Activated CD8-positive, alpha-beta T cell treated with anti-CD3 and anti-CD28 coated beads for 36 hours (primary cell): ENCODE measurements at regions of chr9 and their contacts with region 1.

Region 1: GRCh38 chr9:109903515-109904138 is 123.6 kb downstream of the PALM2AKAP2 start:
- DNase-seq: peak; percentile 74
- ATAC-seq: peak; percentile 73
- H3K4me3 Mint-ChIP-seq: no peak overlapping the region
- H3K27ac Mint-ChIP-seq: no peak overlapping the region
- H3K4me1 Mint-ChIP-seq: no peaks in the 10 kb centered on the region
- H3K27me3 Mint-ChIP-seq: peaks cover under 1% of the 10 kb centered on the region
- CTCF ChIP-seq: peak; percentile 86

Region 2: DNA sequence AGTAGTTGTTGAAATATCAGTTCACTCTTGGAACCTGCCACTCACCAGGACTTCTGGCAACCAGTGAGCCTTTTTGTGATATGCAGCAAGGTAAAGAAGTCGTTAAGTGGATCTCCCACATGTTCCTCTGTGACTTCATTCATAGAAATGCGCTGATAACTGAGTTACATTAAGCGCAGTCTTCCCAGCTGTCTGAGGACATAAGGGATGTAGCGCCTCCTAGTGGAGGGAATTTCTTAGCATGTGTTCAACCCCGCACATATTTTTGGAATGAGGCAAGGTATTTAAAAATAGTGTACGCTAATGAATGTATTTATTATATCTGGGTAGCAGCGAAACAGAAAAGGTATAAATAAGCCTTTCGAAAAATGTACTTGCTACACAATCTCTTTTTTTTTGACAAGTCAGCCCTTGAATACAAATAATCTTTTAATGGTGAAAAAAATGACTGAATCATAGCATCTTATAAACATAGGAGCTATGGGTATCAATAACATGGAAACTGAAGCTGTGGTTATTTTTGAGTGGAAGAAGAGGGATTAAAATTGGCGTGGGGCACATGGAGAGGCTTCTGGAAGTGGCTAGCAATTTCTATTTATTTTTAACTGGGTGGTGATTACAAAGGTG is 85.7 kb before region 1 on chr9:
- CTCF ChIA-PET with region 1: no interaction called
- POLR2A ChIA-PET with region 1: no interaction called
- intact Hi-C with region 1: no loop called
- DNase-seq: peak; percentile 62
- ATAC-seq: no peak
- H3K4me3 Mint-ChIP-seq: no peak overlapping the region
- H3K27ac Mint-ChIP-seq: no peak overlapping the region
- H3K4me1 Mint-ChIP-seq: no peaks in the 10 kb centered on the region
- H3K27me3 Mint-ChIP-seq: peaks cover 6% of the 10 kb centered on the region
- CTCF ChIP-seq: peak; percentile 65

Region 3: GRCh38 chr9:109831998-109832658 is 71.5 kb before region 1 on chr9:
- CTCF ChIA-PET with region 1: no interaction called
- POLR2A ChIA-PET with region 1: no interaction called
- intact Hi-C with region 1: no loop called
- DNase-seq: no peak
- ATAC-seq: no peak
- H3K4me3 Mint-ChIP-seq: no peak overlapping the region
- H3K27ac Mint-ChIP-seq: no peak overlapping the region
- H3K4me1 Mint-ChIP-seq: no peaks in the 10 kb centered on the region
- H3K27me3 Mint-ChIP-seq: peaks cover 5% of the 10 kb centered on the region
- CTCF ChIP-seq: no peak

Region 4: GRCh38 chr9:109868207-109868606 is 35.4 kb before region 1 on chr9:
- CTCF ChIA-PET with region 1: no interaction called
- POLR2A ChIA-PET with region 1: no interaction called
- intact Hi-C with region 1: no loop called
- DNase-seq: no peak
- ATAC-seq: no peak
- H3K4me3 Mint-ChIP-seq: no peak overlapping the region
- H3K27ac Mint-ChIP-seq: no peak overlapping the region
- H3K4me1 Mint-ChIP-seq: no peaks in the 10 kb centered on the region
- H3K27me3 Mint-ChIP-seq: peaks cover 10% of the 10 kb centered on the region
- CTCF ChIP-seq: no peak

Region 5: DNA sequence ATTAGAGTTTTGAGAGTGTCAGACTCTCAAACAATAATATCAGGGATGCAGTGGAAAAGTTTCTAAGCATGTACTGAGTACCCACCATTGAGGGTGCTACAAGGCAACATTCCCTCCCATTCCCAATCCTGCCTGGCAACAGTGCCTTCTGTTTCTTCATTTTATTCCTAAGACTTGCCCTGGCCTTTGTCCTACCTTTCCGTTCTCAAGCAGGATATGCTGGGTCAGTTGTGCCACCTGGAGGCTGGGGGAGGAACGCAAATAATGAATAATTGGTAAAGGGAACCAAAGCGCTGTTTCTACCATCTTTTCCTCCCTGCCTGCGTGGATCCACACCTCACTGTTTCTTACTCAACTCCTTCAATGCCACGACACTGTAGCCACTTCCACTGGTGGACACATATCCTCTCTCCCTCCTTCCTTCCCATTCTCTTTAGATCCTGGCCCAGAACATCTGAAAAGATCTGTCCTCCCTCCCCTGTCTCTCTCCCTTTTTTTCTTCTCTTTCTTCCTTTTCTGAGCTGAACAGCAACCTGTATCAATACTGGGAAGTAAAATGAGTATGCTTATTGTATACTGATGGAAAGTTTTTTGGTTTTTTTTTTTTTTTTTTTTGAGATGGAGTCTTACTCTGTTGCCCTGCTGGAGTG is 154.8 kb after region 1 on chr9:
- CTCF ChIA-PET with region 1: interaction called, 53 read pairs
- POLR2A ChIA-PET with region 1: no interaction called
- intact Hi-C with region 1: loop called (anchors 1 kb)
- DNase-seq: peak; percentile 64
- ATAC-seq: peak; percentile 65
- H3K4me3 Mint-ChIP-seq: no peak overlapping the region
- H3K27ac Mint-ChIP-seq: no peak overlapping the region
- H3K4me1 Mint-ChIP-seq: no peaks in the 10 kb centered on the region
- H3K27me3 Mint-ChIP-seq: peaks cover 4% of the 10 kb centered on the region
- CTCF ChIP-seq: peak; percentile 57

Region 6: DNA sequence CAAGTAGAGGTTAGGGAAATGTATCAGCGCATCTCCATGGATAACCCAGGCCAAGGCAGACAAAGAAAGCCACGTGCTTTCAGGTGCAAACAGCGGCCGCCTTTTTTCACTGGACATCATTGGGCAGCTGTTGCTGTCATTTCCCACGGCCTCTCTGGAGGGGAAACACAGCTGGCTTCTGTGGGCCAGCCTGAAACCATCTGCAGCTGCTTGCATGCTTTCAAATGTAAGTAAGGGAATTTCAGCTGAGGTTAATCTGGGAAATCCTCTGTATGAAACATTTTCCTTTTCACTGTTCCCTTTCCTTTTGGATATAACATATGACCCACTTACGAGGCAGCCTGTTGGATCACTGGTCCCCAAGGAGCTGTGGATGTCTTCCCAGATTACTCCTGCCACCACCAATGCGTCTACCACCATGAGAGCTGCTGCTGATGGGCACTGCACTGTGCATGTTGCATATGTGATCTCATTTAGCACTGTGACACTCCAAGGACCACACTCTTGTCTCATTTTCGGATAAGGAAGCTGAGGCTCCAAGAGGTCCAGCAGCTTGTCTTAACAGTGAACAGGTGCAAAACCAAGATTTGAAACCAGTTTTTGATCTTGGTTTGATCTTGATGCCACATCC is 198.0 kb after region 1 on chr9:
- CTCF ChIA-PET with region 1: no interaction called
- POLR2A ChIA-PET with region 1: no interaction called
- intact Hi-C with region 1: no loop called
- DNase-seq: no peak
- ATAC-seq: no peak
- H3K4me3 Mint-ChIP-seq: no peak overlapping the region
- H3K27ac Mint-ChIP-seq: no peak overlapping the region
- H3K4me1 Mint-ChIP-seq: no peaks in the 10 kb centered on the region
- H3K27me3 Mint-ChIP-seq: no peaks in the 10 kb centered on the region
- CTCF ChIP-seq: no peak